ENCODE measurements at regions of chr5 and their contacts with region 1.

Region 1: DNA sequence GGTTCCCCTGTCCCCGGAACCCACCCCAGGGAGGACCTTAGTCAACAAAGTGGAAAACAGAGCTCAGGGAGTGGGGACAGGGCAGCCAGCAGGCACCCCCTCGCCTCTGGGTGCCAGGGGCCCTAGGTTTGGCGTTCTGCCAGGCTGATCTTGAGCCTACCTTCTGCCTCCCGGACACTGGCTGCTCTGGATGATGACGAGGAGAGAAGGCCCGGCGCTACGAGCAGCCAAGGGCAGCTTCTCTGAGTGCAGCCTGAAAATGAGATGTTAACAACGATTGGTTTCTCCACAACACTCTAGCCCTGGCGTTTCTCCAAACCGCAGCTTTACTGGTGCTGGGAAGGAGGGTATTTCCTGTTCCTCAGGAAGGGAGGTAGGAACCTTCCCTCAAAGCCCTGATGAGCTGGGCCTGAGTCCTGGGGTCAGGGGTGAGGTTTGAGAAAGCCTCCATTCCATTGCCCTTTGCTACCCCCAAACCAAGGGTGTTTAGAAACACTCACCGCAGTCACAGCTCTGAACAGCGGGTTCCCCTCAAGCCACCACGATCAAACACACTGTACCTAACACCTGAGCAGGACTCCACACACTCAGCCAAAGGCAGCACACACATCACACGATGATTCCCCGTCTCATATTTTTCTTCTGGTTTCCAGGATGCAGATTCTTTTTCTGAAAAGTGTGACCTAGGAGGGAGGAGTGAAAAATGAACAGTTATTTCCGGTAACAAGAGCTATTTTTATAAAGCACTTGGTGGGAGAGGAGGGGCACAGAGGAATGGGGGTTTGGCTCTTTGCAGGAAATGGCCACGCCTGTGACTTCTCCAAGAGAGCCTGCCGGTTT is at the start of gene STING1:
- DNase-seq: peak; percentile 89
- ATAC-seq: peak; percentile 75
- total RNA-seq, gene STING1: 47.2 TPM

Region 2: GRCh38 chr5:138654281-138654867 is 827.9 kb before region 1 on chr5:
- intact Hi-C with region 1: no loop called
- DNase-seq: no peak
- ATAC-seq: no peak

Region 3: DNA sequence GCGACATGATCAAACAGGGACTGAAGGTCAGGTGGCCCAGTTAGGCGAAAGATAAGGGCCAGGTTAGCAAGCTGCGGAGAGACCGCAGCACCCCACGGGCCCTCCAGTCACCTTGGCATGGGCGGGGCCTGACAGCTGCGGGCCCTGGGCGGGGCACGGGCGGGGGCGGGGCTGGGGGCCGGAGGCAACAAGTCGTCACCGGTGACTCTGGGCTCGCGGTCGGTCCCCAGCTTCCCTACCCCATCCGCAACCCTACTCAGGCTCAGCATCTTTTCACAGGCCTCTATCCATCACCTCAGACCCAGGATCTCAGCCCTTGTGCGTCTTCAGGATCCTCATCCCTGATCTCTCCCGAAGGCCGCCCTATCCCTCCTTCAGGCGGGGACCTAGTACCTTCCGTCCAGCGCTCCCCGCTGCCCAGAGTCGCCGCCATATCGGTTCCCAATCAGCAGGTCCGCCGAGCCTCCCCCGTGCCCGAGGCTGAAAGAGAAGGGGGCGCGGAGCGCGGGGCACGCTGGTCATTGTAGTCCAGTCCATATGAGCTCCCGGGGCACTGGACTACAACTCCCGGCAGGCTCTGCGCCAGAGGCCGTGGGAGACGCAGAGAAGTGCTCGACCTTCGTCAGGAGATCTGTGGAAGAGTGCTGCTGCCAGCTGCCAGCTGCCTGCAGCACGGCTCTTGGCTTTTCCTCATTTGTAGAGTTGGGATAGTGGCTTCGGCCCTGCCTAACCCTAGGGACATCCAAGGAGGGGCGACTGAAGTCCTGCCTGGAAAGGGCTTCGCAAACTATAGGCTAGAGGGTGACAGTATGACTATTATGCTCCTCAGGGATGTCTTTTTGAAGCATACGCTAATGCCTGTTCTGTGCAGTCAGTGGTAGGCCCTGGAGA is 43.0 kb before region 1 on chr5 and contains the start of gene DNAJC18:
- intact Hi-C with region 1: loop called (anchors 5 kb)
- DNase-seq: peak; percentile 98
- ATAC-seq: peak; percentile 99
- total RNA-seq, gene DNAJC18: 7.9 TPM

Region 4: DNA sequence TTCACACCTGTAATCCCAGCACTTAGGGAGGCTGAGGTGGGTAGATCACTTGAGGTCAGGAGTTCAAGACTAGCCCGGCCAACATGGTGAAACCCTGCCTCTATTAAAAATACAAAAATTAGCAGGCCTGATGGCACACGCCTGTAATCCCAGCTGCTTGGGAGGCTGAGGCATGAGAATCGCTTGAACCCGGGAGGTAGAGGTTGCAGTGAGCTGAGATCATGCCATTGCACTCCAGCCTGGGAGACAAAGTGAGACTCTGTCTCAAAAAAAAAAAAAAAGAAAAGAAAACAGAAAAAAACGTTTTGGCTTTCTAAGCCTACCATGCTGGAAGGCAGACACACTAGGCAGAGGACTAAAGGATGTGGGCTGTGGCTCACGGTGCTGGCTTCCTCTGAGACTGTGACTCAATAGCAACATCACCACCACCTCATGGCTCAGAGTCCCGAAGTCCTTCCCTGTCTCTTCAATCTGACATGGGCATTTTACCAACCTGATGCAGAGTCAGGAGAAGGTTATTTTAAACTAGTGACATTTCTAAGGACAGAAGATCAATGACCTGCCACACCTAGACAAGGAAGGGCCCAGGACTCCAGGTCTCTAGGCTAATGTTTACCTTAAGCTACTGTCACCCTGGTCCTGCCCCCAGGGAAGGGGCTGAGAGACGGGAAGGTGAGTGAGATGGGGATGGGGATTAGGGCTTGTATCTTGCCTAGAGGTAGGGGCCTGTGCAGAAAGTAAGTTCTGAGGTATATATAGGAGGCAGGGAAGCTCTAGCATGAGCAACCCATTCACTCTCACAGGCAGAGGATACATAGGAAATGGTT is 23.5 kb before region 1 on chr5:
- intact Hi-C with region 1: loop called (anchors 1 kb)
- DNase-seq: no peak
- ATAC-seq: no peak

Measured in Right ventricle myocardium inferior (tissue), 1 donor.